CD4-positive, alpha-beta memory T cell (primary cell): ENCODE measurements at regions of chr9 and their contacts with region 1.

Region 1: GRCh38 chr9:114366334-114367128 is 21.3 kb downstream of the AKNA start:
- DNase-seq: peak; percentile 52 to 78 (median 61)
- H3K4me3 ChIP-seq: no peak overlapping the region
- H3K4me3 Mint-ChIP-seq: peak overlapping the region; percentile 57 to 80 (median 66)
- H3K27ac ChIP-seq: peak overlapping the region; percentile 62
- H3K27ac Mint-ChIP-seq: peak overlapping the region; percentile 78 to 97 (median 96)
- H3K4me1 ChIP-seq: peaks cover 99% of the 10 kb centered on the region
- H3K4me1 Mint-ChIP-seq: peaks cover 57 to 94% (median 80%) of the 10 kb centered on the region in 4 donors
- H3K27me3 ChIP-seq: no peaks in the 10 kb centered on the region
- H3K27me3 Mint-ChIP-seq: no peaks in the 10 kb centered on the region

Region 2: DNA sequence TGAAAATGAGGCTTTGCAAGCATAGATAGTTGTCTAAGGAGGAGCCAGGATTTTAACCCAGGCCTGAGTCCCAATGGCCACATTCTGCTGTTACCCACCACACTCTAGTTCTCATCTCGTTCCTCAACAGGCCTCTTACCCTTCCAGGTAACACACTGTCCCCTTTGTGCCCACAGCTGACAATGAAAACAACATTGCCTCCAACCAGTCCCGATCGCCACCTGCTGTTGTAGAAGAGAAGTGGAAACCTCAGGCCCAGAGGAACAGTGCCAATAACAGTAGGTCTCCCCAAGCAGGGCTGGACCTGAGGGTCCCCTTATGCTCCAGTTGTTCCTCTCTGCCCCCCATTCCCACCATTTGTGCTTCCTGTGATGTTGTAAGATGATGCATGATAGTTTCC is 318.8 kb before region 1 on chr9:
- CTCF ChIA-PET with region 1: no interaction called
- POLR2A ChIA-PET with region 1: no interaction called
- intact Hi-C with region 1: no loop called
- DNase-seq: no peak
- H3K4me3 ChIP-seq: no peak overlapping the region
- H3K4me3 Mint-ChIP-seq: no peak overlapping the region
- H3K27ac ChIP-seq: no peak overlapping the region
- H3K27ac Mint-ChIP-seq: no peak overlapping the region
- H3K4me1 ChIP-seq: no peaks in the 10 kb centered on the region
- H3K4me1 Mint-ChIP-seq: no peaks in the 10 kb centered on the region
- H3K27me3 ChIP-seq: no peaks in the 10 kb centered on the region
- H3K27me3 Mint-ChIP-seq: peaks cover 0 to 4% of the 10 kb centered on the region in 2 donors

Region 3: GRCh38 chr9:114339130-114339908 is 27.2 kb before region 1 on chr9:
- CTCF ChIA-PET with region 1: interaction called, 14 read pairs
- POLR2A ChIA-PET with region 1: interaction called, 34 read pairs
- intact Hi-C with region 1: no loop called
- DNase-seq: peak in 4 of 5 donors; percentile 36 to 49 (median 42)
- H3K4me3 ChIP-seq: no peak overlapping the region
- H3K4me3 Mint-ChIP-seq: no peak overlapping the region
- H3K27ac ChIP-seq: no peak overlapping the region
- H3K27ac Mint-ChIP-seq: peak overlapping the region in 6 of 7 donors; percentile 36 to 73 (median 64)
- H3K4me1 ChIP-seq: no peaks in the 10 kb centered on the region
- H3K4me1 Mint-ChIP-seq: peaks cover 8 to 30% (median 14%) of the 10 kb centered on the region in 4 donors
- H3K27me3 ChIP-seq: no peaks in the 10 kb centered on the region
- H3K27me3 Mint-ChIP-seq: no peaks in the 10 kb centered on the region

Region 4: DNA sequence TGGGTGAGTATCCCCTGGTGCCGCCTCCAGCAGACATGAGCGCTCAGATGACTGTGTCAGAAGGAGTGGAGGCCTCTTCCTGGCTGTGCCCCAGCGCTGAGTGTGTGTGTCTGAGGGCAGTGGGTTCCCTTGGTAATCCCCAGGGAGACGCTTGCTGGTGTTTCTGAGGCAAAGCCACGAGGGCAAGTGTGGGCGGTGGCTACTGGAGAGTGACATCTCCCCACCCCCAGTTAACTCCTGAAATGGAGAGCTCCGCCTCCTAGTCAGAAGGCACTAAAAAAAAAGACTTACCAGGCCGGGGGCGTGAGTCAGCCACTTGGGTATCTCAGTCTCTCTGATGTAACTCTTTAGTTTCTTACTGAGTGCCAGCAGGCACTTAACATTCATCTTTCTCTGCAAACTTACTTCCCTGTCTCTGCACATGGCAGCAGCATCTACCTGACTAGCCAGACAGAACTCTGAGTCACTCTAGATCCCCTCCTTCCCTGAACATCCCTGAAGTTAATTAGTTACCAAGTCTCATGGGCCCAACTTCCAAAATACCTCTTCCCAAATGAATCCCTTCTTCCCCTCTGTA is 17.5 kb before region 1 on chr9:
- CTCF ChIA-PET with region 1: interaction called, 4 read pairs
- POLR2A ChIA-PET with region 1: interaction called, 80 read pairs
- intact Hi-C with region 1: loop called (anchors 2 kb)
- DNase-seq: peak in 3 of 5 donors; percentile 36 to 82 (median 37)
- H3K4me3 ChIP-seq: no peak overlapping the region
- H3K4me3 Mint-ChIP-seq: peak overlapping the region in 6 of 8 donors; percentile 17 to 47 (median 31)
- H3K27ac ChIP-seq: peak overlapping the region; percentile 30
- H3K27ac Mint-ChIP-seq: peak overlapping the region; percentile 84 to 95 (median 92)
- H3K4me1 ChIP-seq: peaks cover 42% of the 10 kb centered on the region
- H3K4me1 Mint-ChIP-seq: peaks cover 28 to 51% (median 35%) of the 10 kb centered on the region in 4 donors
- H3K27me3 ChIP-seq: no peaks in the 10 kb centered on the region
- H3K27me3 Mint-ChIP-seq: no peaks in the 10 kb centered on the region

Region 5: DNA sequence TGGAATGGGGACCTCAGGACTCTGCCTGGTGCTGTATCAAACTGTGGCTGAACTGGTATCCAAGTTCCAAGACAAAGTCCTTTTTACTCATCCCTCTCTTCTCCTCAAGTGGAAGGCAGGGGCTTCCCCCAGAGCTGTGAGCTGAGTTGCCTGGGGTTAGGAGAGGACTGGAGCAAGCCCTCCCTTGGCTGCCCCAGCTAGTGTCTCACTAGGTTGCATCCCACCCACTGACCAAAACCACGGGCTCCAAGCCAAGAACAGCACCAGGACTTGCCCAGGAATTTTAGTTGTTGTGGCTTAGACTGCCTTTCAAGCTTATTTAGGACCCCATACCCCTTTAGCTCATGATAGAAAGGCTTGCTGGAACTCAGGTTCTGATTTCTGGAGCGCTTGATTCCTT is 910.1 kb after region 1 on chr9:
- CTCF ChIA-PET with region 1: no interaction called
- POLR2A ChIA-PET with region 1: no interaction called
- intact Hi-C with region 1: no loop called
- DNase-seq: no peak
- H3K4me3 ChIP-seq: no peak overlapping the region
- H3K4me3 Mint-ChIP-seq: no peak overlapping the region
- H3K27ac ChIP-seq: no peak overlapping the region
- H3K27ac Mint-ChIP-seq: no peak overlapping the region
- H3K4me1 ChIP-seq: no peaks in the 10 kb centered on the region
- H3K4me1 Mint-ChIP-seq: no peaks in the 10 kb centered on the region
- H3K27me3 ChIP-seq: no peaks in the 10 kb centered on the region
- H3K27me3 Mint-ChIP-seq: peaks cover 2 to 8% of the 10 kb centered on the region in 2 donors

Region 6: DNA sequence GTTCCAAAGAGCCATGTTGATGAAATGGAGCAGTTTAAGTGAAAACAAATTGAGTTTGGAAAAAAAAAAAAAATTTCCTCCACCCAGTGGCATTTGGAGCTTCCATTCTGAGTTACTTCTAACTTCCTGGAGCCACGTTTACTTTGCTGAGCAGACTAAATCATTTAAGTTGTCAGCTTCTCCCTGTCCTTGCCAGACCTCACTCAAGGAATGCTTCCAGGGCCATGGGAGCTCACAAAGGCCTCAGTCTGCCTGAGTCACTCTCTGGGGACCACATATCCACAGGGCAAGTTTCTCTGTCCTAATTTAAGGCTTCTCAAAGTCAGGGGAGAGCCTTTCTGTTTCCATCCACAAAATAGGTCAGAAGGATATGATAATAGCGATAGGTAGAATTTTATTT is 961.7 kb after region 1 on chr9:
- CTCF ChIA-PET with region 1: no interaction called
- POLR2A ChIA-PET with region 1: no interaction called
- intact Hi-C with region 1: no loop called
- DNase-seq: no peak
- H3K4me3 ChIP-seq: no peak overlapping the region
- H3K4me3 Mint-ChIP-seq: no peak overlapping the region
- H3K27ac ChIP-seq: no peak overlapping the region
- H3K27ac Mint-ChIP-seq: no peak overlapping the region
- H3K4me1 ChIP-seq: no peaks in the 10 kb centered on the region
- H3K4me1 Mint-ChIP-seq: no peaks in the 10 kb centered on the region
- H3K27me3 ChIP-seq: no peaks in the 10 kb centered on the region
- H3K27me3 Mint-ChIP-seq: peaks cover 6% of the 10 kb centered on the region in 2 donors